H1 (cell line): ENCODE measurements at regions of chr20 and their contacts with region 1.

Region 1: DNA sequence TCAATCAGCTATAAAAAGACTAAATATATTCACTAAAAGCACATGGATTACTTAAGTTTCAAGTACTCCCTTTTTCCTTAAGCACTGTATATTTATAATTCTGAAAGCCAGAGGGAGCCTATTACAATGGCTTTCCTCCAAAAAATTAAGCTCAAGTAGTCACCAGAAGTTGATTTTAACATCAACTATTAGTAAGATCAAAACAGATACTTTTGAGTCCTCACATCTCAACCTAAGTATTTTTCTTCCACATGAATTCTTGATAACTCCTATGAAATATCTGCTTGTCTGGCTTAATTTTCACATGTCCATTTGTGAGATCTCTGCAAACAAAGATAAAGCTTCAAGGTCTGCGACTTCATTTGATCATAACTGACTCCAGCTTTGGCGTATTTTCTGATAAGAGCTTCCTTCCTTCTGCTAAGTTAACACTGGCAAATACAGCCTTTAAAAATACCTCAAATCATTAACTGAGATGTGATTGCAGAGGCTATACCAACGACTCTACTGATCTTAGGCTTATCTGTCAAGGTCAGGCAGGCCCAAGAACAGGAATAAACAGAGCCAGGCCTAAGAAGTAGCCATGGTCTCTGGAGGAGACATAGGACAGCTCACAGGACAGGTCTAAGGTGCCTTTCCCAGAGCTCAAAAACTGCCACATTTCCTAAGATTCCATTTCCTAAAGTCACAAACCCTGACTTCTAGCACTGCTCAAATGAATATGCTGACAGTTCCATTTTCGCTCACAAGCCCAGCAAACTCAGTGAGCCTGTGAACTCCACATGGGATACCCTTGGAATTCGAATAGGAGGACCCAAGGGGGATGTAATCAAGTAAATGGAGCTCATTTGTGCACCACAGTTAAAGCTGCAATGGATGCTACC is 10.0 kb downstream of the SNX5 start:
- DNase-seq: no peak
- H3K4me3 ChIP-seq: no peak overlapping the region
- H3K27ac ChIP-seq: no peak overlapping the region
- H3K4me1 ChIP-seq: peaks cover 0 to 27% (median 6%) of the 10 kb centered on the region in 4 experiments; a peak in 5 of 7 replicates
- H3K27me3 ChIP-seq: no peaks in the 10 kb centered on the region
- CTCF ChIP-seq: no peak
- EP300 ChIP-seq: no peak
- POLR2A ChIP-seq: 0 out of 3 replicates have a peak, but pooled peaks of 1 of the 2 experiments have one; percentile 69
- RAD21 ChIP-seq: no peak

Region 2: DNA sequence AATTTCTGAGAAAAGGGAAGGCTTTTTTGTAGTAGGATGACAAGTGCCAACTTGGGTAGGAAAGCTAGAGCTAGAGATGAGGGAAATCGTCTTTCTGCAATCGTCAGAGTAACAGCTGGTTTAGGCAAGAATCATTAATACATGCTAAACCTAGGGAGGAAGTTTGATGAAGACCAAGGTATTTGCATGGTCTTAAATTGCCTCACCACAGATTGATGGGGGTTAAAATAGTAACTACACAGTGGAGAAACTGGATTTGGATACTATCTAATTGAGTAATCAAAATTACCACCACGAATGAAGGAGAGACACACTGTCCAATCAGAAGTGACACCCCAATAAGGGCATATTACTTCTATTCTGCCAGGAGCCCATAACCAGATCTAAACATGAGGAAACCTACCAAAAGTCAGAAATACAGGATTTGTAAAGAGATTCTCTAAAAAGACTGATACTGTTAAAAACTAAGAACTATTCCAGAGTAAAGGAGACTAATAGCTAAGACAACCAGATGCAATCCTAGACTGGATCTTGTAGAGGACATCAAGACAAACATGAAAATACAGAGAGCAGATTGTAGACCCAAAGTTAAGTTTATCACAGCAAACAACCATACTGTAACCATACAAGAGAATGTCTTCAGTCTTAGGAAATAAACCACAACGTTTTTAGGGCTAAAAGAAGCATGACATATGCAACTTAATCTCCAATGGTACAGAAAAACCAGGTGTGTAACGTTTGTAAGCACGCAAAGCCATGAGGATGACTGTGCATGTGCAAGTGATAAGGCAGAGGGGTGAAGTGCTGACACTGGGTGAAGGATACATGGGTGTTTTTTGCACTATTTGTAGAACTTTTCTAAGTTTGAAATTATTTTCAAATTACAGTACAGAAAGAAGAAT is 11.8 kb before region 1 on chr20:
- CTCF ChIA-PET with region 1: interaction called, 3 read pairs
- POLR2A ChIA-PET with region 1: interaction called, 65 read pairs
- DNase-seq: no peak
- H3K4me3 ChIP-seq: no peak overlapping the region
- H3K27ac ChIP-seq: no peak overlapping the region
- H3K4me1 ChIP-seq: no peaks in the 10 kb centered on the region
- H3K27me3 ChIP-seq: no peaks in the 10 kb centered on the region
- CTCF ChIP-seq: no peak
- EP300 ChIP-seq: no peak
- POLR2A ChIP-seq: no peak
- RAD21 ChIP-seq: no peak

Region 3: GRCh38 chr20:18011482-18011881 is 52.9 kb after region 1 on chr20:
- CTCF ChIA-PET with region 1: no interaction called
- POLR2A ChIA-PET with region 1: no interaction called
- DNase-seq: no peak
- H3K4me3 ChIP-seq: no peak overlapping the region
- H3K27ac ChIP-seq: no peak overlapping the region
- H3K4me1 ChIP-seq: no peaks in the 10 kb centered on the region; a peak in 1 of 7 replicates
- H3K27me3 ChIP-seq: no peaks in the 10 kb centered on the region
- CTCF ChIP-seq: no peak
- EP300 ChIP-seq: no peak
- POLR2A ChIP-seq: no peak
- RAD21 ChIP-seq: no peak